T-cell (primary cell): ENCODE measurements at regions of chr12 and their contacts with region 1.

Region 1: DNA sequence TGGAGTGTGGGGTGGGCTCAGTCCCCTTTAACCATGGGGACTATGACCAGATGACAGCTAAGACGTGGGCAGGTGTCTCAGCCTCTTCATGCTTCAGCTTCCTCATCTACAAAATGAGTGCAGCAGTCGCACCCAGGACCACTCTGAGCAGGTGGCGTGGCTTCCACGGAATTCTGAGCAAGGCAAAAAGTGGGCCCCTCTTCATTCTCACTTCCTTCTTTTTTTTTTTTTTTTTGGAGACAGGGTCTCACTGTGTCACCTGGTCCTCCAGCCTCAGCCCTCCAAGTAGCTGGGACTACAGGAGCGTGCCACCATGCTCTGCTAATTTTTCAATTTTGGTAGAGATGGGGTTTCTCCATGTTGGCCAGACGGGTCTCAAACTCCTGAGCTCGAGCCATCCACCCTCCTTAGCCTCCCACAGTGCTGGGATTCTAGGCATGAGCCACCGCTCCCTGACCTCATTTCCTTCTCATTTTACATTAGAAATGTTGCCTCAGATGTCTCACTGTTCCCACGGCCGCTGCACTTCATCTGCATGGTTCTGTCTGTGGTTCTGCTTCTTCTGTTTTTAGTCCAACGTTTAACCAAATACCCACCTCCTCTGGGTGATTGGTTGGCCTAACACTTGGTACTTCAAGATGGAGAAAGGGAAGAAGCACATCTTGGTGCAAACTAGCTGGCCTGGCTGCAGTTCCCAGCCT is 41.3 kb upstream of the BCL7A start:
- DNase-seq: peak in 1 of 35 experiments; percentile 21
- ATAC-seq: no peak
- H3K4me3 ChIP-seq: no peak overlapping the region
- H3K4me3 Mint-ChIP-seq: no peak overlapping the region
- H3K27ac ChIP-seq: no peak overlapping the region
- H3K27ac Mint-ChIP-seq: no peak overlapping the region
- H3K4me1 ChIP-seq: no peaks in the 10 kb centered on the region
- H3K4me1 Mint-ChIP-seq: peaks cover 0 to 10% (median 7%) of the 10 kb centered on the region in 3 donors
- H3K27me3 ChIP-seq: peaks cover 0 to 13% of the 10 kb centered on the region in 2 experiments
- H3K27me3 Mint-ChIP-seq: no peaks in the 10 kb centered on the region

Region 2: DNA sequence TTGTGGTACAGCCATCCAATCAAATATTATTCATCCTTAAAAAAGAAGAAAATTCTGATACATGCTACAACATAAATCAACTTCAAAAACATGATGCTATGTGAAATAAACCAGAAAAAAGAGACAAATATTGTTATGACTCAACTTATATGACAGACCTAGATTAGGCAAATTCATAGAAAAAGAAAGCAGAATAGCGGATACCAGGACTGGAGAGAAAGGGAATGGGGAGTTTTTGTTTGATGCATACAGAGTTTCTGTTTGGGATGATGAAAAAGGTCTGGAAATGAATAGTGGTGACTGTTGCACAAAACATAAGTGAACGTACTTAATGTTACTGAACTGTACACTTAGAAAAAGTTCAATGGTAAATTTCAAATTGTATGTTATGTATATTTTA is 1158.5 kb before region 1 on chr12:
- CTCF ChIA-PET with region 1: no interaction called
- POLR2A ChIA-PET with region 1: interaction called in 1 of 2 experiments, 10 read pairs
- DNase-seq: no peak
- ATAC-seq: no peak
- H3K4me3 ChIP-seq: no peak overlapping the region
- H3K4me3 Mint-ChIP-seq: no peak overlapping the region
- H3K27ac ChIP-seq: no peak overlapping the region
- H3K27ac Mint-ChIP-seq: peak overlapping the region in 1 of 2 donors; percentile 22
- H3K4me1 ChIP-seq: peaks cover 0 to 5% of the 10 kb centered on the region in 2 experiments
- H3K4me1 Mint-ChIP-seq: peaks cover 49 to 66% (median 55%) of the 10 kb centered on the region in 3 donors
- H3K27me3 ChIP-seq: no peaks in the 10 kb centered on the region
- H3K27me3 Mint-ChIP-seq: no peaks in the 10 kb centered on the region